Ascending aorta (tissue), 2 donors: ENCODE measurements at regions of chr10 and their contacts with region 1.

Region 1: DNA sequence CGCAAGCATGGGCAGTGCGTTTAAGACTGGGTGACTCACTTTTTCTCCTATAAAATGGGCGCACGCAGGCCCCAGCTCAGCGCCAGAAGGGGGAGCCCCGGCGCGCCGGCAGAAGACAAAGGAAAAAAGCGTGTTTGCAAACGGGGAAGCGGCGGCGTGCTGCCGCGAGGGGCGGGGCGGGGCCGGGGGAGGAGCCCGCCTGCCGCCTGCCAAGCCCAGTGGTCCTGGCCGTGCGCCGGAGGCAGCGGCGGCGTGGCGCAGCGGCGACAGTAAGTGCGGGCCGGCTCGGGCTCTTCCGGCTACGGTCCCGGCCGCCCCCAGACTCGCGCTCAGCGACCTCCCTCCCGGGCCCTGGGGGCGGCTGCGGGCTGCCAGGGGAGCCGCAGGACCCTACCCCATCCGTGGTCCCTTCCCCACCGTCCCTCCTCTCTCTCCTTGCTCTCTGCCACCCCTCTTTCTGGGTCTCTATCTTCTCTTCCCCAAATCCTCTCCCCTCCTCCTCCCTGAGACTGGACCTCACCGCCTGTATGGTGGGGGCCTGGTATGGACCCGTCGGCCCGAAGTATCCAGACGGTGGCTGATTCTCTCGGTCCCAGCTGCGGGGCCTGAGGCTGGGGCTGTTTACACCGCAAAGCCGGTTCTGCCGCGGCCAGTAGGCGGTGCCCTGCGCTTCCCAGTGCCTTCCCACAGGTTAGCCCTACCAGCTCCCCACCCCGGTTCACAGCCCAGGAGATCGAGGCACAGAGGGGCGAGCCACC is at the start of gene SLC29A3:
- DNase-seq: peak in 1 of 2 donors; percentile 86
- H3K4me3 ChIP-seq: peak within 1 kb of the TSS; percentile 74 to 88
- H3K27ac ChIP-seq: peak within 1 kb of the TSS; percentile 54 to 69
- H3K4me1 ChIP-seq: peaks cover 5 to 7% of the 10 kb centered on the region in 2 donors
- H3K27me3 ChIP-seq: no peaks in the 10 kb centered on the region
- CTCF ChIP-seq: peak; percentile 23 to 69 (median 61)
- total RNA-seq, gene SLC29A3: 0.64 TPM

Region 2: GRCh38 chr10:71372882-71373495 is 53.8 kb after region 1 on chr10:
- intact Hi-C with region 1: loop called (anchors 1 kb)
- DNase-seq: no peak
- H3K4me3 ChIP-seq: no peak overlapping the region
- H3K27ac ChIP-seq: peak overlapping the region in 1 of 2 donors; percentile 2
- H3K4me1 ChIP-seq: peaks cover 0 to 3% of the 10 kb centered on the region in 2 donors
- H3K27me3 ChIP-seq: no peaks in the 10 kb centered on the region
- CTCF ChIP-seq: no peak